ENCODE measurements at regions of chr20 and their contacts with region 1.

Region 1: DNA sequence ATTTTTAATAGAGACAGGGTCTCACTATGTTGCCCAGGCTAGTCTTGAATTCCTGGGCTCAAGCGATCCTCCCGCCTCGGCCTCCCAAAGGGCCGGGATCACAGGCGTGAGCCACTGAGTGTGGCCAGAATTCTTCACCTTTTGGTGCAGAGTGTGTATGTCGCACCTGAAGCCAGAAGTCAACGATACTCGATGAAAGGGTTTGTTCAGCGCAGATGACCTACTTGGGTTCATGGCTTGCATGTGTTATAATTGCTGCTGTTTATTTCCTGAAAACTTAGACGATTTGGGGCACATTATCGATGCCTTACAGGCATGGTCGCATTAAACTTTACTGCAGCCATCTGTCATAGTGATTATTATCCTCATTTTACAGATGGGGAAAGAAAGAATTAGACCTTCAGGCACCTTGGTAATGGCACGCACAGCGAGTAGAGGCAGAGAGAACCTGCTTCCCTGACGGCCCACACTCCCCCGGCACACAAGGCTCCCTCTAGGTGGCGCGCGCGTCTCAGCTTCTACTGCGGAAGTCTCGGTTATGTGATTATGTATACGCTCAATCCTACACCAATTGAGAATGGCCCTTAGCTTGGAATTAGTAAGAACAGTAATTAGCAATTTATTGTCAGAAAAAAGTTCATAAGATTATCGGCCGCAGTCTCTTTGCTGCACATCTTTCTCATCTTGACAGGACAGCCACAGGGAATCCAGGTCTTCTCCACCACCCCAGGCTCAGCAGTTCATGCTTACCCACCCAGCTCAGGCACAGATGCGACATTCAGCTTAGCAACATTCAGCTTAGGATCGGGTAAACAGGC is 212.8 kb upstream of the PROKR2 start:
- DNase-seq: peak; percentile 71
- H3K4me3 ChIP-seq: no peak overlapping the region
- H3K27ac ChIP-seq: no peak overlapping the region
- H3K4me1 ChIP-seq: no peaks in the 10 kb centered on the region
- H3K27me3 ChIP-seq: peaks cover 0 to 5% of the 10 kb centered on the region in 2 experiments
- CTCF ChIP-seq: peak; percentile 91 to 94
- POLR2A ChIP-seq: no peak

Region 2: DNA sequence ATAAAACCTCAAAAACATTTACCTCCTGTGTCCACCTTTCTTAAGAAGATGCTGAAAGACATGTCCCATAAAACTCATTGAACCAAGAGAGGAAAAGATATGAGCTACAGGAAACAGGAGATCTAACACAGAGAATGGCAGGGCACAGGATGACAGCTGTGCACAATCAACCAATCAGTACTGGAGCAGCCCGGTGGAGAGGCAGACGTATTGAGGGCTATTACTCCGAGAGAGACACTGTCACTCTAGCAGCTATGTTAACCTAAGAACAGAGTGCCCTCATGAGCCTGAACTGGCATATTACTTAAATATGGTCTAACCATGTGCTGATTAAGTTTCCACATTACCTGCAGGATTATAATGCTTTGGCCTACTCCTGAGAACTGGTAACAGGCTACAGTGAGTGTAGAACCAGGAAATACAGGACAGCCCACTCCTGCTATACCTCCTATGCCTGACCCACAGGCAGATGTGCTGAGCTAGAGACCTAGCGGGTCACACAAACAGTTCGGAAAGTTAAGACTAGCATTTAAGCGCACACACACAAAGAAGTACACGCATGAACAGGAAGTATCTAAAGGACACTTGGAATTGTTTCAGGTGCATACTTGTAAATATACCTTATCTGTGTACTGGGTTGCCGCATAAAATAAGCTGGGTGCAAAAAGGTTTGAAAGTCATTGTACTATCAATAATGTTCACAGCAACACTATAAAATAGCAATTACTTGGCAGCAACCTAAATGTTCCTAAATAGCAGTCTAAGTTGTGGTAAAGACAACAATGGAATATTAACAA is 21.4 kb after region 1 on chr20:
- CTCF ChIA-PET with region 1: interaction called, 25 read pairs
- POLR2A ChIA-PET with region 1: no interaction called
- dilution Hi-C with region 1: no loop called
- intact Hi-C with region 1: loop called (anchors 2 kb)
- DNase-seq: no peak
- H3K4me3 ChIP-seq: no peak overlapping the region
- H3K27ac ChIP-seq: no peak overlapping the region
- H3K4me1 ChIP-seq: no peaks in the 10 kb centered on the region
- H3K27me3 ChIP-seq: no peaks in the 10 kb centered on the region
- CTCF ChIP-seq: no peak
- POLR2A ChIP-seq: no peak

Region 3: GRCh38 chr20:5933802-5934436 is 404.4 kb after region 1 on chr20:
- CTCF ChIA-PET with region 1: interaction called, 20 read pairs
- POLR2A ChIA-PET with region 1: no interaction called
- dilution Hi-C with region 1: no loop called
- intact Hi-C with region 1: loop called (anchors 1 kb)
- DNase-seq: peak; percentile 25
- H3K4me3 ChIP-seq: no peak overlapping the region
- H3K27ac ChIP-seq: no peak overlapping the region
- H3K4me1 ChIP-seq: no peaks in the 10 kb centered on the region
- H3K27me3 ChIP-seq: peaks cover 2 to 6% of the 10 kb centered on the region in 2 experiments
- CTCF ChIP-seq: no peak
- POLR2A ChIP-seq: no peak

Region 4: GRCh38 chr20:6000871-6001270 is 471.3 kb after region 1 on chr20:
- CTCF ChIA-PET with region 1: interaction called, 38 read pairs
- POLR2A ChIA-PET with region 1: no interaction called
- dilution Hi-C with region 1: no loop called
- intact Hi-C with region 1: loop called (anchors 1 kb)
- DNase-seq: no peak
- H3K4me3 ChIP-seq: no peak overlapping the region
- H3K27ac ChIP-seq: no peak overlapping the region
- H3K4me1 ChIP-seq: peaks cover 4% of the 10 kb centered on the region
- H3K27me3 ChIP-seq: no peaks in the 10 kb centered on the region
- CTCF ChIP-seq: no peak
- POLR2A ChIP-seq: no peak

Region 5: GRCh38 chr20:6074145-6074561 is 544.6 kb after region 1 on chr20:
- CTCF ChIA-PET with region 1: interaction called, 191 read pairs
- POLR2A ChIA-PET with region 1: interaction called, 4 read pairs
- dilution Hi-C with region 1: no loop called
- intact Hi-C with region 1: loop called (anchors 1 kb)
- DNase-seq: no peak
- H3K4me3 ChIP-seq: no peak overlapping the region
- H3K27ac ChIP-seq: no peak overlapping the region
- H3K4me1 ChIP-seq: no peaks in the 10 kb centered on the region
- H3K27me3 ChIP-seq: no peaks in the 10 kb centered on the region
- CTCF ChIP-seq: peak; percentile 14 to 18
- POLR2A ChIP-seq: no peak